Sciatic nerve (tissue), 2 donors: ENCODE measurements at regions of chr3 and their contacts with region 1.

Region 1: DNA sequence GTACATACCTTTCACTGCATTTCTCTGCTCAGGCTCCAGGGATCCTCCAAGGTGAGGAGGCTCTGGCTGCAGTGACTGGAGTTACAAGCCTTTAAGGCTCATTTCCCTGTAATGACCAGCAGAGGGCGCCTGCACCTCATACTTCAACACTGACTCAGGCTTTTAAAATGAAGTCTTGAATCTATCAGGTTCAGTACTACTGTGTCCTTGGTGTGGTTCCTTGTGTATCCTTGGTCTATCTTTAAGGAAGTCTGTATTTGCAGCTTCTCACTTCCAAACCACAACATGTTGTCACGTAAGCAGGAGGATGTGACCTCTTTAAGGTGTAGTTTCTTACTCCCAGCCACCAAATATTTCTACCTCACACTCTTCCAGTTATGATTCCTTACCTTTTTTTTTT is 122.5 kb upstream of the ZBED2 start:
- DNase-seq: peak; percentile 81
- ATAC-seq: peak; percentile 87

Region 2: DNA sequence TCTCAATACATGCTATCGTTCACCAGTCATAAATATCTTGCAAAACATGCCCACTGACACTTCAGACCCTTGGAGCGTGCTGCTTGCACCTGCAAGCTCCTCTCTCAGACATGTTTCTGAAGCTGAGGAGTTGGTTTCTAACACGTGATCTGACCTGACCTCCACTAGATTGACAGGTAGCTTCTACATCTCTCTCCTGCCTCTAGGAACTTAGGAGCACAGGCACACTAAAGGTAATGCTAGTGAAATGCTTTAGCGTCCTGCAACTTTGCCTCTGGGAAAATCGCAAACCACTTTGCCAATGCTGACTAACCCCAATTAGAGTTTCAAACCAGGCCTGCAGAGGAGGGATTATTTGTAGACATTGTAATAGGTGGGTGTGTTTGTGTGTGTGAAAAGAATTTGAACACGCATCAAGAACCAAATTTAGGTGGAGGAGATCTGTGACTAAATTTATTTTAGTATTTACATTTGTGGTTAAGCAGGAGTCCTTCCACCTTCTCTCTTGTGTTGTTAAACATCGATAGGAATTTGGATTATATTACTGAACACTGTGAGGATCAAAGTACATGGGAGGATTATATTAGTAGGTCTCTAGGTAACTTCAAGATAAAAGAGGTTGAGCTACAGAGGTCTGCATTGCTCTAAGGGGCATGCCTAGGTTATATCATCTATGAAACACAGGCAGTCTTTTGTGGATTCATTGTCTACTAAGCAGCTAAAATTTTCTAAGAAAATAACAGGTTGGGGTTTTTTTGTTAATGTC is 35.8 kb before region 1 on chr3:
- intact Hi-C with region 1: no loop called
- DNase-seq: no peak
- ATAC-seq: no peak

Region 3: DNA sequence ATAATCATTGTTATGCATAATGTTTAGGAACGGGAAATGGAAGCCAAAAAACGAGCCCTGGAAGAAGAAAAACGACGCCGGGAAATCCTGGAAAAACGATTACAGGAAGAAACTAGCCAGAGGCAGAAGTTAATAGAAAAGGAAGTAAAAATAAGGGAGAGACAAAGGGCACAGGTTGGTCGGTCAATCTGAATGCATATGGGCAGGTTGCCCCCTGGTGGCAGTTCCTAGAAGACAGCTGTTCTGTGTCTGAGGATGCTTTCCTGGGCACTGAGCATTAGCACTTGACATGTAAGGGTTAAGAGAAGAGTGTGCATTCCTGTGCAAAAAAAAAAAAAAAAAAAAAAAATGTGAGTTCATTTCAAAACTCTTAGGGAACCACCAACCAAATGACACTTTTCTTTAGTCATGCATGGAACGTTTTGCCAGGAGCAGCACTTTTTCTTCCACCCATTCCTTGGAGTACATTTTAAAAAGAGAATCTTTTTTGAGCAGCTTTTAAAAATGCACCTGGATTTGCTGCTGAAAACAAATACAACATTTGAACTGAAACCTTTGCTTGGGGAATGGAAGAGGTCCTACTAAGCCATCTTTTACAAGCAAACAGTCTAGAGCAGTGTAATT is 250.2 kb after region 1 on chr3:
- intact Hi-C with region 1: loop called (anchors 2 kb)
- DNase-seq: peak; percentile 93
- ATAC-seq: peak; percentile 90